ENCODE measurements at regions of chr4 and their contacts with region 1.

Region 1: DNA sequence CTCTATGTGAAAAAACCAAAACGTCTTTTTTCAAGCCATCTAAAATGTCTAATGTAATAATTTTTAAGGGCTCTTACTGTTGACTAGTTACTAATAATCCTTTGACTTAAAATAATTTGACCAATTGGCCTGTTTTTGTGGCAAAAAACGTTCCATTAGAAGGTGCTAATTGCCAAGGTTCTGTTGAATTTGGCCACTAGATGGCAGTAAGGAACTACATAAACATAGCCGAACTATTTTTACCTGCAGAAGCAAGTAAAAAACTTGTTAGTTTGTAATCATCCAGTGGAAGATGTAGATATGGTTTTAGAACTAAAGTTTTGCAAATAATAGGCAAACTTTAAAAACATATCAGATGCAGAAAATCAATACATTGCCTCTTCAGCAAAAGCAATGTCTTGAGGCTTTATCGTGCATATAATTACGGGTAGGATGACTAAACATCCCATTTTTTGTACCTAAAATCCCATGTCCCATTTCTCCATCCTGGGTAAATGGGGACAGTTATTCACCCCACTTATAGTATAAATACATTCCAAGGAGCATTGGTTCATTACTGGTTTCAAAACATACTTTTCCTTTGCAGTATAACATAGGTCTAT is 57.6 kb downstream of the PROM1 start:
- DNase-seq: peak; percentile 75
- H3K4me3 ChIP-seq: peak overlapping the region; percentile 29
- H3K27ac ChIP-seq: no peak overlapping the region
- H3K4me1 ChIP-seq: peaks cover 32% of the 10 kb centered on the region
- H3K27me3 ChIP-seq: no peaks in the 10 kb centered on the region
- CTCF ChIP-seq: peak; percentile 87

Region 2: GRCh38 chr4:15938182-15938581 is 88.1 kb before region 1 on chr4:
- CTCF ChIA-PET with region 1: no interaction called
- POLR2A ChIA-PET with region 1: no interaction called
- intact Hi-C with region 1: no loop called
- DNase-seq: no peak
- H3K4me3 ChIP-seq: no peak overlapping the region
- H3K27ac ChIP-seq: no peak overlapping the region
- H3K4me1 ChIP-seq: no peaks in the 10 kb centered on the region
- H3K27me3 ChIP-seq: no peaks in the 10 kb centered on the region
- CTCF ChIP-seq: no peak

Region 3: DNA sequence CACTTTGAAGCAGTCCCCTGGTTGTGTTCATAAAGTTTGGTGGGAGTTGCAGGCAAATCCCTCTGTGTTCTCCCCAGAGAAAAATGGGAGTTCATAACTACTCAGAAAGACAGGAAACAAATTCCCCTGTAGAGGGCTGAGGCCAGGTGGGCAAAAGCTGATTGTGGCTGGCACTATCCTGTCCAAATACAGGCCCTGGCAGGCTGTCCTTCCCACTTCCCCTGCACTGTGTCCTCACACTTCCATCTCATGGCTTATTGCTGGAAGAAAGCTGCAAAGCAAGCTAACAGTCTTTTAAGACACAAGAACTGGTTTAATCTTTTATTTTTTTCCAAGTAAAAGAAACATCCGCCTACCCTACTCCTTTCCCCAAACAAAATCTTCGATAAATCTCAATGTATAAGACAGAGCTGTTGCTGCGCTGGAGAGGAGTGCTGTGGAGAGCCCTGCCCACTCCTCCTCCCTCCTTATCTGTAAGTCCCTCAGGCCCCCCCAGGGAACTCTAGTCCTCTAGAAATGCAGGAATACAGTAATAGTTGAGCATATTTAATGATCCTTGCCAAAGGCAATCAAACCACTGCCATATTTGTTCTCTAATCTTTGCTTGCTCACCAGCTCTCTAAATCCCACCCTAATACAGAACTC is 186.0 kb after region 1 on chr4:
- CTCF ChIA-PET with region 1: no interaction called
- POLR2A ChIA-PET with region 1: no interaction called
- intact Hi-C with region 1: no loop called
- DNase-seq: no peak
- H3K4me3 ChIP-seq: no peak overlapping the region
- H3K27ac ChIP-seq: peak overlapping the region; percentile 14
- H3K4me1 ChIP-seq: peaks cover 32% of the 10 kb centered on the region
- H3K27me3 ChIP-seq: no peaks in the 10 kb centered on the region
- CTCF ChIP-seq: no peak

Region 4: DNA sequence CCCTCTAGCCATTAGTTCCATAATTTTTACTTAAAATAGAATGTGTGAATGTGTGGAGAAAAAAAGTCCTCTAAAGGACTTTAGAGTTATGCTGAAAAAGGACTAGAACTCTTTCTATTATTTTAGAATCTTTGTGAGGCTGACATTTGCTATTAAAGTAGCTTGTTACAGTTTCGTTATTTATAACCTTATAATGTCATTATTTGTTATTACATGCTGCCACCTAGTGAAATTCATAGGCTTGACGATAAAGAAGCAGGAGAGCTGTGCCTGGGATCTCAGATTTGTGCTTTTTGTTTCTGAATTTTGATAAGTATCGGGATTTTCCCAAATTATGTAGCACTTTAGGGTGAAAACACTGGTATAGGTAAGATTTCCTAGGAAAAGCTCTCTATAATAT is 238.5 kb after region 1 on chr4:
- CTCF ChIA-PET with region 1: interaction called, 4 read pairs
- POLR2A ChIA-PET with region 1: no interaction called
- intact Hi-C with region 1: loop called (anchors 1 kb)
- DNase-seq: peak; percentile 67
- H3K4me3 ChIP-seq: no peak overlapping the region
- H3K27ac ChIP-seq: no peak overlapping the region
- H3K4me1 ChIP-seq: peaks cover 5% of the 10 kb centered on the region
- H3K27me3 ChIP-seq: no peaks in the 10 kb centered on the region
- CTCF ChIP-seq: peak; percentile 65

Region 5: GRCh38 chr4:16344853-16345252 is 318.6 kb after region 1 on chr4:
- CTCF ChIA-PET with region 1: interaction called, 12 read pairs
- POLR2A ChIA-PET with region 1: no interaction called
- intact Hi-C with region 1: no loop called
- DNase-seq: no peak
- H3K4me3 ChIP-seq: no peak overlapping the region
- H3K27ac ChIP-seq: no peak overlapping the region
- H3K4me1 ChIP-seq: no peaks in the 10 kb centered on the region
- H3K27me3 ChIP-seq: no peaks in the 10 kb centered on the region
- CTCF ChIP-seq: no peak

Region 6: DNA sequence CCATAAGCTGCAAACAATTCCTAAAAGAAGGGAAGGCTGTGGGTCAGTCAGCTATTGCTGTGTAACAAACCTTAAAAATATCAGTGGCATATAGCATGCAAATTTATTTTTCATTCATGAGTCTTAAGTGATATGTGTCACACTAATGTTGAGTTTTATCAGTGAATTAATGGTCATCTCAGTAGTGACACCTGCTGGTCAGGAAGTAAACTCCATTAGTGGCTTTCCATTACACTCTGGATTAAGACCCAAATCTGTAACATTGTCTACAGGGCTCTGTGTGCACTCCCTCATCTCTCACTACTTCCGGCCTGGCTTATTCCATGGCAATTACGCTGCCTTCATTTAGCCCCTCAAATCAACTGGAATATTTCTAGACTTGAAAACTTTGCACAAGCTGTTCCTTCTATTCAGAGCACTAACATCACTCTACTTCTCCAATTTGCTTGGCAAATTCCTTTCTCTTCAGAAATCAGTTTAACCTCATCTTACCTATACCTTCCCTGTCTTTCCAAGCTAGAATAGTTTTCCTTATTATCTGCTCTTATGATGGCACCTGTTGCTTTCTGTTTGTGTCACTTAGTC is 417.3 kb after region 1 on chr4:
- CTCF ChIA-PET with region 1: no interaction called
- POLR2A ChIA-PET with region 1: no interaction called
- intact Hi-C with region 1: loop called (anchors 10 kb)
- DNase-seq: peak; percentile 74
- H3K4me3 ChIP-seq: no peak overlapping the region
- H3K27ac ChIP-seq: no peak overlapping the region
- H3K4me1 ChIP-seq: no peaks in the 10 kb centered on the region
- H3K27me3 ChIP-seq: no peaks in the 10 kb centered on the region
- CTCF ChIP-seq: peak; percentile 74

Measured in A673 (cell line).